Sciatic nerve (tissue), 2 donors: ENCODE measurements at regions of chr7 and their contacts with region 1.

Region 1: GRCh38 chr7:126026421-126027088 is 1096.9 kb upstream of the POT1 start:
- DNase-seq: no peak
- ATAC-seq: no peak

Region 2: DNA sequence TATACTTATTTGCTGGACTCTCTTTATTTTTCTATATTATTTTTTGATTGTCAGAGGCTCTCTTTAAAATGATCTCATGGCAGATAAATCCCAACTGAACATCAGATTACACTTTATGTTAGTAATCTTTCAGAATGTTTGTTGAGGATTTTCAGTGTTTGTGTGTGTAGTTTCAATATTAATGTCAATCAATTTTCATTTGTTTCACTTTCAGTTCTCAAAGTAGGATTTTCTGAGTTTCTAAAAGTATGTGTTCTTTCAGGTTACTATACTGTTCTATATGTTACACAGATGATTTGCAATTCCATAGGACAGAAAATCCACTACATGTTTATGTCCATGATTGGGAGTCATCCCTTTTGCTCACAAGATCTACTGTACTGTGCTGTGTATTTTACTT is 785.0 kb before region 1 on chr7:
- intact Hi-C with region 1: loop called (anchors 5 kb)
- DNase-seq: no peak
- ATAC-seq: no peak

Region 3: GRCh38 chr7:125495997-125496396 is 530.6 kb before region 1 on chr7:
- intact Hi-C with region 1: no loop called
- DNase-seq: no peak
- ATAC-seq: no peak

Region 4: GRCh38 chr7:126203185-126203584 is 176.6 kb after region 1 on chr7:
- intact Hi-C with region 1: no loop called
- DNase-seq: no peak
- ATAC-seq: no peak